ENCODE measurements at regions of chr7 and their contacts with region 1.

Region 1: DNA sequence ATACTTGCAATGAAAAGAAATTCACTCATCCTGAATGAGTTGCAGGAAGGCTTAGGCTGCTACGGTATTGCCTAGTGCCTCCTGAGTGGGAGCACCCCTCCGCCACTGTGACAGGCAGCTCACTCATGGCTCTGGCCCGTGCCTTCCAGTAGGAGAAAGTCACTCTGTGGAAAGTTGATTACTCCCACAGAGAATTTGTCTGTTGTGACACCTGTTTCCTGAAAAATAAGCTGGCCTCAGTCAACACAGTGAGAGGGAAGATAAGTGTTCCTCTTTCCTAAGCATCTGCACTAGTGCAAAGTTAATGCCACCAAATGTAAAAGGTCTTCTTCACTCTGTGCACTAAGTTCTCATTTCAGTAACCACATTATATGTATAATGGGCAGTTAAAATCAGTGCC is 158.8 kb upstream of the INHBA start:
- DNase-seq: no peak
- H3K4me3 ChIP-seq: no peak overlapping the region
- H3K27ac ChIP-seq: no peak overlapping the region
- H3K4me1 ChIP-seq: peaks cover 7% of the 10 kb centered on the region
- H3K27me3 ChIP-seq: no peaks in the 10 kb centered on the region
- CTCF ChIP-seq: no peak

Region 2: DNA sequence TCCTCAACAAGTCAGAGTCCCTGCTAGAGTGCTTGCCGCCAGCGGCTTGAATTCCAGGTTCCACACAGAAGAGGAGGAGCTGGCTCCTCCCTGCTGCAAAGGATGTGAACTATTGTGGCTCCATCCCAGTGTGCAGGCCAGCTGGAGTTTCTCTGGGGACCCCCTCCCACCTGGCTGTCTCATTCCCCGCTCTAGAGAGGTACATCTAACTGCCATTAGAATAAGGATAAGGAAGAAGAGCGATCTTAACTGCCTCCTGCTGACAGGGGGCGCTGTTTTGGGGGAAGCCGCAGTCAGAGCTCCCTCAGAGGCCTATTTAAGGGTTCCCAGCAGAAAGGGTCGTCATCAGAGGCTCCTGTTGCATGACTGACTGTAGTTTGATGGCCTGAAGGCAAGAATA is 1210.0 kb after region 1 on chr7:
- CTCF ChIA-PET with region 1: no interaction called
- POLR2A ChIA-PET with region 1: interaction called, 14 read pairs
- intact Hi-C with region 1: no loop called
- DNase-seq: peak; percentile 62
- H3K4me3 ChIP-seq: no peak overlapping the region
- H3K27ac ChIP-seq: no peak overlapping the region
- H3K4me1 ChIP-seq: no peaks in the 10 kb centered on the region
- H3K27me3 ChIP-seq: no peaks in the 10 kb centered on the region
- CTCF ChIP-seq: peak; percentile 72